ENCODE measurements at regions of chr2 and their contacts with region 1.

Region 1: DNA sequence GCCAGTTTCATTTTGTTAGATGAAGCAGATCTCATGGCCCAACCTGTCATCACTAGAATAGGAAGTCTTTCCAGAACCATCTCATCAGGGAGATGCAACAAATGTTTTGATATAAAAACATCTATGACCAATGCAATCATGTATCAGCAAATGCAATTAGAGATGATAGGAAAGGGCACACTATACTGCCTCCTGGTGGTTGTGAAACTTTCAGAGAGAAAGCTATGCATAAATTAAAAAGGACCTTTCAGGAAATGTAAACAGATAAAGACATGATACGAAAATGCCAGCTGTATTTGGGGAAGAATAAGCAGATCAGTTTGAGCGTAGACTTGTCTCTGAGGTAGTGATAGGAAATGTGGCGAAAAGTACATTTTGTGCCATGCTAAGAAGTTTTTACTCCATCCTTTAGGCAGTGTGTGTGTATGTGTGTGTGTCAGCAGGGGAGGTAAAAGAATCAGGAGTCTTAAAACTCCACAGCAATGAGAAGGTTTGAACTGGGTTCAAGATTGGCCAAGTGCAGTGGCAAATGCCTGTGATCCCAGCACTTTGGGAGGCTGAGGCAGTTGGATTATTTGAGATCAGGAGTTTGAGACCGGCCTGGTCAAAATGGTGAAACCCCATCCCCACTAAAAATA is 479.3 kb downstream of the CPS1 start:
- DNase-seq: no peak
- H3K4me3 Mint-ChIP-seq: no peak overlapping the region
- H3K27ac Mint-ChIP-seq: no peak overlapping the region
- H3K4me1 Mint-ChIP-seq: no peaks in the 10 kb centered on the region
- H3K27me3 Mint-ChIP-seq: no peaks in the 10 kb centered on the region

Region 2: DNA sequence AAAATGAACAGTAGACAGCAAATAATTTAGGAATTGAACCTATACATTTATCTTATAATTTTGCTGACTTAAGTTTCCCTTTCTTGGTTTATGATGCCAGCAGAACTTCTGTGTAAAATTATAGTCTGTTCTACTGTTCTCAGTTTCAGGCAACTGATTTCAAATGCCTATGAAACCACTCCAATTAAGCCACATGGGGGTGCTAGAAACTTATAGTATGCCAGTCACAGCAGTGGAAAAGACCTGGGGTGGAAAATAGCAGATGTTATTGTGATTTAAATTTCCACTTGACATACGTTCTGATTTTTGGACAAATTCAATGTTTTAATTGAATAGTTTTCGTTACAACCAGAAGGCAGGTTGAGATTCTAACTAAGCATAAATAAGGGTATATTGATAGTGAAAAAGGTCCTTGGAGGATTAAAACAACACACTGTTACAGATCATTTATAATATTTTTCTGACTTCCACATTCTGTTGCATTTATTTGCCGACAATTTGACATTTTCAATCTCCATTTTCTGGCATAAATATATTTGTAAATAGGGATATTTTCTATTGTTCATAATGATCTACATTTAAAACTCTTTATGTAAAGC is 417.8 kb before region 1 on chr2:
- intact Hi-C with region 1: loop called (anchors 1 kb)
- DNase-seq: no peak
- H3K4me3 Mint-ChIP-seq: no peak overlapping the region
- H3K27ac Mint-ChIP-seq: no peak overlapping the region
- H3K4me1 Mint-ChIP-seq: no peaks in the 10 kb centered on the region
- H3K27me3 Mint-ChIP-seq: no peaks in the 10 kb centered on the region

Region 3: DNA sequence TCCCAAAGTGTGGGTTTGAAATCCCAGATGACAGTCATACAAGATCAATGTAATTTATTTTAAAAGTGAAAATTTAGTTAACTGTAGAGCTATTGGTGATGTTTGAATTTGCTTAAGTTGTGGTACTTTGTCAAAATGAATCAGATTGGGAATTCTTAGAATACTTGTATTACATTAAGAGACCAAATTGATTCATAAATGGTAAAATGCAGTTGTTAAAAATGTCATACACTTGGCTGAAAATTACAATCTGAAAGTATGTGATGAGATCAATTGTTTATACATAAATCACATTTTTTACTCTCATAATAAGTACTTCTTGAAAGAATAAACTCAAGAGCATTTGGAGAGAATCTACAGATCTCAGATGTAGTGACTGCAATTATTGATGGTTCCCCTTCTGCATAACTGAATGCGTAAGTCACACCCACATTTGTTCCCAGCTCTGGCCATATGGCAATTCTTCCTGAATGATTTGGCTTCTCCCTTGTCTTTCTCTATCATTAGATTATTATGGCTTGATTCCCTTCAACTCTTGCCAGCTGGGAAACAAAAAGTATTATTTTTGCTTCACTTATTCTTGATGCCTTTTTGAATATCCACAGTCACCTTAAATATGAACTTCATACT is 79.3 kb after region 1 on chr2:
- intact Hi-C with region 1: no loop called
- DNase-seq: no peak
- H3K4me3 Mint-ChIP-seq: no peak overlapping the region
- H3K27ac Mint-ChIP-seq: no peak overlapping the region
- H3K4me1 Mint-ChIP-seq: no peaks in the 10 kb centered on the region
- H3K27me3 Mint-ChIP-seq: no peaks in the 10 kb centered on the region